ENCODE measurements at regions of chr17 and their contacts with region 1.

Region 1: DNA sequence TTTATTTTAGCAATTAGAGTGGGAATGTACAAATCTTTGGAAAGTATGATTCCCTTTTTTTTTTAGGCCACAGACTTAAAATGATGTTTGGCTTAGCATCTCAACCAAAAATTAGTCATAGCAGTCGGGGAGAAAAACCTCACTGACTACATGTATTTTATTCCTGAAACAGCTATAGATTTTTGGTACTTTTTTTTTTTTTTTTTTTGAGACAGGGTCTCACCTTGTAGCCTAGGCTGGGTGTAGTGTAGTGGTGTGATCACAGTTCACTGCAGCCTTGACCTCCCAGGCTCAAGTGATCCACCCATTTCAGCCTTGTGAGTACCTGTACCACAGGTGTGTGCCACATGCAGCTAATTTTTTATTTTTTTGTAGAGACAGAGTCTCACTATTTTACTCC is 23.4 kb downstream of the RNFT1 start:
- DNase-seq: peak; percentile 31
- ATAC-seq: peak; percentile 51
- H3K4me3 Mint-ChIP-seq: peak overlapping the region; percentile 27
- H3K27ac Mint-ChIP-seq: peak overlapping the region; percentile 94
- H3K4me1 Mint-ChIP-seq: peaks cover 53% of the 10 kb centered on the region
- H3K27me3 Mint-ChIP-seq: no peaks in the 10 kb centered on the region

Region 2: DNA sequence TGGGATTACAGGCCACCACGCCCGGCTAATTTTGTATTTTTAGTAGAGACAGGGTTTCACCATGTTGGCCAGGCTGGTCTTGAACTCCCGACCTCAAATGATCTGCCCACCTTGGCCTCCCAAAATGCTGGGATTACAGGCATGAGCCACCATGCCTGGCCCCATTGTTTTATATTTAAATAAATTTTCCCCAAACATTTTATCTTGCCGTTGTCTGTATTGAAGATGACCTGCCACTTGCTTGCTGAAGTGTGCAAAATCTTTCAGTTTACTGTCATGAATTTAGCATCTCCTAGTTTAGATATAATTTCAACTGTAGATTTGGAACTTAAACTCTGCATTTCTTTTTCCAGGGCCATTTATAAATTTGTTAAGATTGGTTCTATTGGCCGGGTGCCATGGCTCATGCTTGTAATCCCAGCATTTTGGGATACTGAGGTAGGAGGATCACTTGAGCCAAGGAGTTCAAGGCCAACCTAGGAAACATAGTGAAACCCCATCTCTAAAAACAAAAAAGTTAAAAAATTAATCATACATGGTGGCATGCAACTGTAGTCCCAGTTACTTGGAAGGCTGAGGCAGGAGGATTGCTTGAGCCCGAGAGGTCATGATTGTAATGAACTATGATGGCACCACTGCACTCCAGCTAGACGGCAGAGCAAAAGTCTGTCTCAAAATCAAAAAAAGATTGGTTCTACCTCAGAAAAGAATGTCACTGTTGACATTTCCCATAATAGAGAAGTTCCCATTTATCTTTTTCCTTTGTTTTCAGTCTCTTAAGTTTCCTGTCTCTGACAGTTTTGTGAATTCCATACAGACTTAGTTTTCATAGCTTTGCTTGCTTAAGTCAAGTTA is 149.3 kb before region 1 on chr17:
- CTCF ChIA-PET with region 1: no interaction called
- POLR2A ChIA-PET with region 1: no interaction called
- intact Hi-C with region 1: no loop called
- DNase-seq: no peak
- ATAC-seq: no peak
- H3K4me3 Mint-ChIP-seq: no peak overlapping the region
- H3K27ac Mint-ChIP-seq: peak overlapping the region; percentile 51
- H3K4me1 Mint-ChIP-seq: peaks cover 54% of the 10 kb centered on the region
- H3K27me3 Mint-ChIP-seq: no peaks in the 10 kb centered on the region

Region 3: GRCh38 chr17:59829217-59830006 is 111.7 kb before region 1 on chr17:
- CTCF ChIA-PET with region 1: no interaction called
- POLR2A ChIA-PET with region 1: no interaction called
- intact Hi-C with region 1: loop called in 1 of 2 experiments (anchors 1 kb)
- DNase-seq: peak; percentile 65
- ATAC-seq: peak; percentile 72
- H3K4me3 Mint-ChIP-seq: peak overlapping the region; percentile 78
- H3K27ac Mint-ChIP-seq: peak overlapping the region; percentile 93
- H3K4me1 Mint-ChIP-seq: peaks cover 87% of the 10 kb centered on the region
- H3K27me3 Mint-ChIP-seq: no peaks in the 10 kb centered on the region

Region 4: DNA sequence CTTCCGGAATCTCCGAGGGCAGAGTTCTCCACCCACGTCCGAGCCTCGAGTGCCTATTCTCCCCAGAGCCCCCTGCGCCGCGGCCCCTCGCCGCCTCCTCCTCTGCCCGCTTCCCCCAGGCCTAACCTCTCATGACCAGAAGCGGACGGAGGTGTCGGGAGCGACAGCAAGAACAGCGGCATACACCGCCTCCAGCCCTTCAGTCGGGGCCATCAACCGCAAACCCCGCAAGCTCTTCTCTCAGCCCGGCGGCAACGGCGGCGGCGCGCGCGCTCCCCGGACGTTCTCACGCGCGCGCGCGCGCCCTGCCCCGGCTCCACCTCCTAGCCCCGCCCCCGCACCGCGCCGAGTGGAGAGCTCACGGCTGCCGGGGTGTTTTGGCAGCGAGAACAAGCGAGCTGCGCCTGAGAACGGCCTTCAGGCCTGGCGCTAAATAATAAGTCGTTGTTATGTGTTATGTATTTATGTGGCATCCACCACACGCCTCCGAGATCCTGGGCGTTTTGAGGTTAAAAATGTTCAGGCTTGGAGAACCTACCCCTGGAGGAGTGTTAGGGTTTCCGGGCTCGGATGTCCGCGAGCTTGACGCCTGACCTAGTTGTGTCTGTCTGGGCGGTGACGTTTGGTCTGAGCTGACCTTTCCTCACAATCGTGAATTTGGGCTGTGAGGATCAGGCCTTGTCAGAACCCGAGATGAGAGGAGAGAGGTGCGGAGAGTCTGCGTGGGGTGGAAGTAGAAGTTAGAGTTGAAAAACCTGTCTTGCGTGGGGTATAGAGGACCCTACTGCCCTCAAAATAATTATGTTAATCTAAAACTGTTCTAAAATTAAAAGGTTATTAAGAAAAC is 23.6 kb after region 1 on chr17 and contains the start of gene RNFT1:
- CTCF ChIA-PET with region 1: interaction called, 4 read pairs
- POLR2A ChIA-PET with region 1: interaction called, 14 read pairs
- intact Hi-C with region 1: loop called in 1 of 2 experiments (anchors 1 kb)
- DNase-seq: peak; percentile 97
- ATAC-seq: peak; percentile 84
- H3K4me3 Mint-ChIP-seq: peak within 1 kb of the TSS; percentile 78
- H3K27ac Mint-ChIP-seq: peak within 1 kb of the TSS; percentile 96
- H3K4me1 Mint-ChIP-seq: peaks cover 19% of the 10 kb centered on the region
- H3K27me3 Mint-ChIP-seq: no peaks in the 10 kb centered on the region
- total RNA-seq, gene RNFT1: 32.8 to 36.9 TPM

Region 5: DNA sequence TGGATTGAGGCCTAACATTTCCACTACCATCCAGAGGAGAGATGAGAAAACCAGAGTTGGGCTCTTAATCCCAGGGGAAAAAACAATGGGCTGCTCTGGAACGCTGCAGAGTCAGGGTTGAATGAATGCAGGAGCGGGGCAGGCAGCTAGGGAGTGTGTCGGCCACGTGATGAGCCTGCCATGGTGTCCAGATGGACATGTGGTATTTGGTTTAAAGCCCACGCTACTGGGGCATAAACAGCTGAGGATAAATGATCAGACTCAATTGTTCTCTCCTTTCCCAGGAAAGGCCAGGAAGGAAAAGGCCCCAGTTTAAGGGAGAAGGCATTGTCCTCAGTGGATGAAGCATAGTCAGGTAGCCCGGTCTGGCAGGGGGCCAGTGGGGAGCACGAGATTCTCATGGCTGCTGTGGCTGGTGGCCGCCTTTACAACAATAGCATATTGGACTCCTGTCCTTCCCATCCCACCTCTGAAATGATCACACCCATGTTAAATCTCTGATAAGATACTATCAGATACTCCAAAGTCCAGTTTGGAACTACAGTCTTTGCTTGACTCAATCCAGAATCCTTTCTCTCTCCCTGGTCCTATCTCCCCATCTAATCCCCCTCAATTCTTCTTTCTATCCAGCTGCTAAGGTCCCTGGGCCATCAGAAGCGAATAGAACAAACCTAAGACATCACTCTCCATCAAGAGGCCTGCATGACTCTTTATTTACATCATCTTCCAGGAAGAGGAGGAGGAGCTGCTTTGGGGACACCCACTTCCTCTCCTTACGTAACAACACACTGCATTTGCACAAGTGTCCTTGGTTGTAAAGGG is 229.0 kb after region 1 on chr17:
- CTCF ChIA-PET with region 1: no interaction called
- POLR2A ChIA-PET with region 1: no interaction called
- intact Hi-C with region 1: no loop called
- DNase-seq: peak; percentile 32
- ATAC-seq: peak; percentile 51
- H3K4me3 Mint-ChIP-seq: no peak overlapping the region
- H3K27ac Mint-ChIP-seq: peak overlapping the region; percentile 79
- H3K4me1 Mint-ChIP-seq: peaks cover 26% of the 10 kb centered on the region
- H3K27me3 Mint-ChIP-seq: no peaks in the 10 kb centered on the region

Measured in activated CD4-positive, alpha-beta T cell treated with anti-CD3 and anti-CD28 coated beads for 36 hours (primary cell).